ENCODE measurements at regions of chr9 and their contacts with region 1.

Region 1: GRCh38 chr9:5292141-5292540 is 12.4 kb downstream of the RLN2 start:
- DNase-seq: no peak

Region 2: DNA sequence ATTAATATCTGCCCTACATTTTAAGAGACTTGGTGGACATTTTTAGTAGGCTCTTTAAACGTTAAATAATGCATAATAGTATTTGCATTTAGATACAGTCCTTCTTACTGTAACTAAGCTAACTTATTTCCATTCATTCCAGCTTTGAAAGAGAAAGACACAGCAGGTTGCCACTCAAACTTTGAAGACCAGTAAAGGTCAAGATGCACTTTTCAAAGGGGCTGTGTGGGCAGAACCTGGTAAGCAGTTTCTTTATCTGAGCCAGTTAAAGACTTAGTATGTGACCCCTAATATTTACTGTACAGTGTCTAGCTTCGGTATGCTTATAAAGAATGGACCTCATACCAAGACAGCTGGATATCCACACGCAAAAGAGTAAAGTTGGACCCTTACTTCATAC is 124.8 kb after region 1 on chr9:
- intact Hi-C with region 1: loop called (anchors 10 kb)
- DNase-seq: no peak

Region 3: DNA sequence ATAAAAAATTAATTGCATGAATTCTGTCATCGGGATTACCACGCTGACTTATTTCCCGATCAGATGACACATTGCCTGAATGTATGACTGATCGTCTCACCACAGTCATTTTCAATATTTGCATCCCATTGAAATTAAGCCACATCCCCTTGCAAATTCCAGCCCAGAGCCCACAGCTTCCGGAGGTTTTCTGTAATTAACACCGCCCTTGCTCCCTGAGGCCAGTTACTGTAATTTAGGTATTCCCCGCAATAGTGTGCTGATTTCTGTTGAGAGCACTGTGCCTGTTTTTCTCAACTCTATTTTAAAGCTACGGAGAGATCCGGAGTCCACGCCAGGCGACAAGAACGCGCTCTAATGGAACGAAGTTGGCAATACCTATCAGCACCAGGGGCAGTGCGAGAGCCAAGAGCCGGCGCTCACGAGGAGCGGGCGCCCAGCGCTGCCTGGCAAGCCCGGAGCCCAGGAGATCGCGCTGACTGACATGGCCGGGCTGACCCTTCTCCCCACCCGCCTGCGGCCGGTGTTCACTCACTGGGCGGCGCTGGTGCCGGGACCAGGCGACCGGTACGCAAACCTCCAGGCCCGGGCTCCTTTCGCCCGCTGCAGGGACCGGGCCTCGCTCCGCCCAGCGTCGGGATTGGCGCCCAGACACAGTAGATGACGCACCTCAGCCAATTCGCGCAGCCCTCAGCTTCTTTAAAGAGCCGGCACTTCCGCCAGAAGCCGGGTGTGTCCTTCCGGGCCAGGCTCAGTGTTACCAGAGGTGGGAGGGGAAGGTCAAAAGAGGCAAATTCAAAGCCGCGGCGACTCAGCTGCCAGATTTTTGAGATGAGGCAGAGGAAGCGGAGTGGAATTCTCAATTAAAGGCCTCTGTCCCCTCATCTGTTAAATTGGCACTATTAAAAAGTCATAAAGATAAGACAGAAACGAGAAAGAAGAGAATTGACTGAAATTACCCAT is 145.4 kb after region 1 on chr9 and contains the start of gene PLGRKT:
- intact Hi-C with region 1: no loop called
- DNase-seq: peak; percentile 92 to 99 (median 96)

Region 4: GRCh38 chr9:5714501-5715401 is 422.6 kb after region 1 on chr9:
- intact Hi-C with region 1: no loop called
- DNase-seq: no peak

Region 5: DNA sequence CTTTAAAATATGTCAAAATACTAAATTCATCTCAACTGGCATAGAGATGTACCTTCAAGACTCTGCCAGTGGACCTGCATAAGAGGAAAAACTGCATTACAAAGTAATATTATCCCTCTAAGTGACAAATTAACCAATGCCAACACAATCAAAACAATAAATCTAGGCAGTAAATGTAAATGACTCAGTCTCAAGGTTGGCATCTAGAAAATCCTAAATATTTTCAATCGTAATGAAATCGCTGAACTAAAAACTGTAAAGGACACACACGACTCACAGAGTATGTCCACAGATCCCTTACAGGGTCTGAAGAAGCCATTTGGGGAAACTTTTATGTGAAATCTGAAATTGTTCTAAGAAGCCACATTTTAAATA is 509.6 kb after region 1 on chr9:
- intact Hi-C with region 1: no loop called
- DNase-seq: no peak